B cell (primary cell): ENCODE measurements at regions of chr17 and their contacts with region 1.

Region 1: GRCh38 chr17:60435244-60436167 is 13.2 kb downstream of the CHCT1 start:
- DNase-seq: peak; percentile 79
- ATAC-seq: peak; percentile 85
- H3K4me3 ChIP-seq: no peak overlapping the region
- H3K4me3 Mint-ChIP-seq: no peak overlapping the region
- H3K27ac ChIP-seq: no peak overlapping the region
- H3K27ac Mint-ChIP-seq: no peak overlapping the region
- H3K4me1 ChIP-seq: no peaks in the 10 kb centered on the region
- H3K4me1 Mint-ChIP-seq: no peaks in the 10 kb centered on the region
- H3K27me3 ChIP-seq: no peaks in the 10 kb centered on the region
- H3K27me3 Mint-ChIP-seq: peaks cover 9% of the 10 kb centered on the region
- CTCF ChIP-seq: peak; percentile 90

Region 2: DNA sequence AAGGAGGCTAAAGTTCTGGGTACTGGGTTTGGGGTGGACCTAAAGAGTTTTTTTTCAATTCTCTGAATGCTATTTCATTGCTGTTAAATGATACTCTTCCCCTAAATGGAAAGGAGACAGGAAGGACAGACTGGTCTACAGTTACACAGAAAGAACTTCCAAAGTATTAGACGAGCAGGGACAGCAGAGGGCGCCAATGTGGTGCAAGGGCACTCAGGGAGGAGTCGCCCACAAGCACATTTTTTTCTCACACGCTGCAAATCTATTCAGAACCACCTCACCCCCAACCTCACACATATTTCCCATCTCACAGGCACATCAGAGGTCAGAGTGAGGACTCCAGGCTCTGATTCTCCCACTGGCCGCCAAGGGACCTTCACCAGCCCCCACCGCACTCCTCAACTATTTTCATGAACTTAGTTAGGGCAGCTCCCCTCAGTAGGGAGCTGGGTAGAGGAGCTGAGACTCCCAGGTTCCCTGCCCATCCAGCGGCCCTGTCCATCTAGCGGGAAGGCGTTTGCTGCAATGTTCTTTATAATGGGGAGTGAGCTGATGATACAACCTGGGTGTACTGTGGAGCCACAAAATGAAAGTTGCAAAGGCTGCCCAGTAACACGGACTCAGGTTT is 292.5 kb before region 1 on chr17:
- CTCF ChIA-PET with region 1: interaction called, 6 read pairs
- POLR2A ChIA-PET with region 1: no interaction called
- intact Hi-C with region 1: loop called (anchors 1 kb)
- DNase-seq: peak; percentile 75
- ATAC-seq: peak; percentile 67
- H3K4me3 ChIP-seq: no peak overlapping the region
- H3K4me3 Mint-ChIP-seq: peak overlapping the region; percentile 12
- H3K27ac ChIP-seq: no peak overlapping the region
- H3K27ac Mint-ChIP-seq: no peak overlapping the region
- H3K4me1 ChIP-seq: peaks cover 33 to 46% of the 10 kb centered on the region in 2 donors
- H3K4me1 Mint-ChIP-seq: peaks cover 37% of the 10 kb centered on the region
- H3K27me3 ChIP-seq: peaks cover 0 to 81% (median 41%) of the 10 kb centered on the region in 4 experiments
- H3K27me3 Mint-ChIP-seq: peaks cover 65% of the 10 kb centered on the region
- CTCF ChIP-seq: peak; percentile 77

Region 3: GRCh38 chr17:60231234-60231633 is 204.3 kb before region 1 on chr17:
- CTCF ChIA-PET with region 1: interaction called, 11 read pairs
- POLR2A ChIA-PET with region 1: no interaction called
- intact Hi-C with region 1: loop called (anchors 1 kb)
- DNase-seq: peak; percentile 9
- ATAC-seq: no peak
- H3K4me3 ChIP-seq: no peak overlapping the region
- H3K4me3 Mint-ChIP-seq: no peak overlapping the region
- H3K27ac ChIP-seq: no peak overlapping the region
- H3K27ac Mint-ChIP-seq: no peak overlapping the region
- H3K4me1 ChIP-seq: no peaks in the 10 kb centered on the region
- H3K4me1 Mint-ChIP-seq: no peaks in the 10 kb centered on the region
- H3K27me3 ChIP-seq: no peaks in the 10 kb centered on the region
- H3K27me3 Mint-ChIP-seq: no peaks in the 10 kb centered on the region
- CTCF ChIP-seq: no peak

Region 4: DNA sequence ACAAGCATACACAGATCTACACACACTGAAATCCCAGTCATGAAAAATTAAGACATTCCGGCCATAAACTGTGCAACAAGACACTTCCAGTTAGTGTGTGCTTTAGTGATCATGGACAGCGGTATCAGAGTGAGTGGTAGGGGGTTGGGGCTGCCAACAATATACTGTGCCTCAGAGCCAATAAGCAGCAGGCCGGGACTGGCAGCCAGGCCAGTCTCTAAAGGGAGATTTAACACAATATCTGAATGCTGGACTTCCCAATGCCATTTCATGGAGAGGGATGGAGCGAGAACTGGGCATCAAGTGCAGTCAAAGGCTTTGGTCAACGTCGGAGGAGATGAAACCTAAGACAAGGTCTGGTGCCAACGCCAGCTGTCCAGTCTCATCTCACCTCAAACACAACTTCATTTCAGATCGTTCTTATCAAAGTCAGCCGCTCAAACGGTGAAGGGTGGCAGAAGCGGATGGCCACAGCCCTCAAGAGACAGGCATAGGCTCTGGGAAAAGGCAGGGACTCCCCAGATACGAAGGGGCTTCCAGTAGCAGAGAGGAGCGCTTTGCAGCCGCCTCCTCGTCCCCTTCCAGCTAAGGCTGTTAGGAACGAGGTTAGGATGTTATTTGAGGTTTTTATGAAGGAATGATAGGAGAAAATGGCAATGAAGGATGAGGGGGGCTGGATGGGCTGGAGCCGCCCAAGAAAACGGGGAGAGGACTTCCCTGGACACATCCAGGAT is 44.5 kb before region 1 on chr17:
- CTCF ChIA-PET with region 1: no interaction called
- POLR2A ChIA-PET with region 1: no interaction called
- intact Hi-C with region 1: no loop called
- DNase-seq: peak; percentile 46
- ATAC-seq: no peak
- H3K4me3 ChIP-seq: peak overlapping the region; percentile 52 to 95 (median 86)
- H3K4me3 Mint-ChIP-seq: peak overlapping the region; percentile 96
- H3K27ac ChIP-seq: peak overlapping the region; percentile 92 to 96
- H3K27ac Mint-ChIP-seq: peak overlapping the region; percentile 97
- H3K4me1 ChIP-seq: peaks cover 37 to 38% of the 10 kb centered on the region in 2 donors
- H3K4me1 Mint-ChIP-seq: peaks cover 65% of the 10 kb centered on the region
- H3K27me3 ChIP-seq: no peaks in the 10 kb centered on the region
- H3K27me3 Mint-ChIP-seq: no peaks in the 10 kb centered on the region
- CTCF ChIP-seq: no peak

Region 5: DNA sequence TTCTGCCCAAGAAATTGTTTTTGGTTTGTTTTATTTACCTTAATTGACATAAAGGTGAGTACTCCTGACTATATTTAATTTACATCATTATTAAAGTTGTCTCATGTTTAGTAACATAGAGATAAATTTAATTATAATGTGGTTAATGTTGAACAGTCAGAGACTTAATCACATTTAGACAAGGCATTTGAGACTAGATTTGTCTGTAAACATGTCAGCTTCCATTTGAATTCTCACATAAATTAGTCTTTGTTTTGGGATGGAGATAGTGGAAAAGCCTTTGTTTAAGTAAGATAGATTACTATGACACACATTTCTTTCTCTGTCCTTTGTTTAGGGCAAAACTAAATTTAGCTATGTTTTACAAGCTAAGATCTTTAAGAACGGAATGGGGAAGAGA is 223.7 kb after region 1 on chr17:
- CTCF ChIA-PET with region 1: no interaction called
- POLR2A ChIA-PET with region 1: interaction called, 13 read pairs
- intact Hi-C with region 1: no loop called
- DNase-seq: no peak
- ATAC-seq: no peak
- H3K4me3 ChIP-seq: no peak overlapping the region
- H3K4me3 Mint-ChIP-seq: no peak overlapping the region
- H3K27ac ChIP-seq: no peak overlapping the region
- H3K27ac Mint-ChIP-seq: no peak overlapping the region
- H3K4me1 ChIP-seq: no peaks in the 10 kb centered on the region
- H3K4me1 Mint-ChIP-seq: peaks cover 1% of the 10 kb centered on the region
- H3K27me3 ChIP-seq: no peaks in the 10 kb centered on the region
- H3K27me3 Mint-ChIP-seq: no peaks in the 10 kb centered on the region
- CTCF ChIP-seq: no peak